ENCODE measurements at regions of chr17 and their contacts with region 1.

Region 1: DNA sequence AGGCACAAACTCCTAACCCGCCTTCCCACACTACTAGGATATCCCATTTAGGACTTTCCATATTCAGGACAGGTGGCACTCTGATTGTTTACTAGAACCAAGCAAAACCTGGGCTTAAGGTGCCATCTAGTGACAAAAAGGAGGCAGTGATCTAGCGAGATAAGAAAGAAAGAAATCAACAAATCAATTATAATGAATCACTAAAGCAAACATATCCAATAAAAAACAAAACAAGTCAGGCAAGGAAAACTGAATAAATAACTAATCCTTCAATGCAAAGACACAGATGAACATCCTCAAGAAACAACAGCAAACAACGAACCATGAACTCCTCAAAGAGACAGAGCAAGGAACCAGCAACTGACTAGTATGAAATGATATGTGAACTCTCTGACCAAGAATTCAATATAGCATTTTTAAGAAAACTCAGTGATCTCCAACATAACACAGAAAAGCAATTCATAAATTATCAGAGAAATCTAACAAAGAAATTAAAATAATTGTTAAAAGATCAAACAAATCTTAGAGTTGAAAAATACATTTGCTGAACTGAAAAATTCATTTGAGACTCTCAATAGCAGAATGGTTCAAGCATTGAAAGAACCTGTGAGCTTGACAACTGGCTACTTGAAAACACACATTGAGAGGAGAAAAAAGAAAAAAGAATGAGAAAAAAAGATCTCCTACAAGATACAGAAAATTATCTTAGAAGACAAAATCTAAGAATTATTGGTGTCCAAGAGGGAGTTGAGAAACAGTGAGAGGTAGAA is 203.7 kb downstream of the CEP112 start:
- DNase-seq: peak; percentile 90
- ATAC-seq: peak; percentile 94
- H3K4me3 ChIP-seq: no peak overlapping the region
- H3K27ac ChIP-seq: no peak overlapping the region
- H3K4me1 ChIP-seq: 0 out of 2 replicates have a peak, but pooled peaks cover 4% of the 10 kb centered on the region
- H3K27me3 ChIP-seq: no peaks in the 10 kb centered on the region
- CTCF ChIP-seq: peak; percentile 98

Region 2: GRCh38 chr17:65231662-65232335 is 756.5 kb before region 1 on chr17:
- CTCF ChIA-PET with region 1: no interaction called
- POLR2A ChIA-PET with region 1: no interaction called
- intact Hi-C with region 1: loop called (anchors 1 kb)
- DNase-seq: peak; percentile 91
- ATAC-seq: peak; percentile 90
- H3K4me3 ChIP-seq: no peak overlapping the region
- H3K27ac ChIP-seq: no peak overlapping the region
- H3K4me1 ChIP-seq: peaks cover 33% of the 10 kb centered on the region
- H3K27me3 ChIP-seq: no peaks in the 10 kb centered on the region
- CTCF ChIP-seq: peak; percentile 98

Region 3: DNA sequence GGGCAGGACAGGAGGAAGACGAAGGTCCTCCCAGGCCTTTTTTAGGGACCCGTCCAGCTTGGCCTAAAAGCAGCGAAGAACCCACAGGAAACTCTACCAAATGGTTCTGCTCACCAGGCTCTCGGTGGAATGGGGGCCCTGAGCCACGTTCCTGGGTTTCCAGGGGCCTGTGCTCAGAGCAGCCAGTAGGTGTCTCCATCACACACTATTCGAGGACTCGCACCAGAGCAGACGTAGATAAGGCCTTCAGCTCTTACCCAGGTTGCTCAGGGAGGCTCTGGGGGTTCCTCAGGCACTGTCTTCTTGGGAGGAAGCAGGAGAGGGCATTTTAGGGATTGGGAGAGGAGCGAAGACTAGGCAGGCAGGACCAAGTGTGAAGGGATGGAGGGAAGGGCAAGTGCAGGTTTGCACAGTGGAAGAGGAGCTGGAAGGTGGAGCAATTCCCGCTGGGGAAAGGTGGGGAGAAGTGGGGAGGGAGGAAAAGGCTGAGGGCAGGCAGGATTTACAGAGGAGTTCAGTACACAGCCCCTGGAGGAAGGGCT is 694.0 kb before region 1 on chr17:
- CTCF ChIA-PET with region 1: interaction called, 3 read pairs
- POLR2A ChIA-PET with region 1: no interaction called
- intact Hi-C with region 1: loop called (anchors 1 kb)
- DNase-seq: peak; percentile 83
- ATAC-seq: peak; percentile 98
- H3K4me3 ChIP-seq: no peak overlapping the region
- H3K27ac ChIP-seq: no peak overlapping the region
- H3K4me1 ChIP-seq: no peaks in the 10 kb centered on the region
- H3K27me3 ChIP-seq: no peaks in the 10 kb centered on the region
- CTCF ChIP-seq: peak; percentile 99

Region 4: DNA sequence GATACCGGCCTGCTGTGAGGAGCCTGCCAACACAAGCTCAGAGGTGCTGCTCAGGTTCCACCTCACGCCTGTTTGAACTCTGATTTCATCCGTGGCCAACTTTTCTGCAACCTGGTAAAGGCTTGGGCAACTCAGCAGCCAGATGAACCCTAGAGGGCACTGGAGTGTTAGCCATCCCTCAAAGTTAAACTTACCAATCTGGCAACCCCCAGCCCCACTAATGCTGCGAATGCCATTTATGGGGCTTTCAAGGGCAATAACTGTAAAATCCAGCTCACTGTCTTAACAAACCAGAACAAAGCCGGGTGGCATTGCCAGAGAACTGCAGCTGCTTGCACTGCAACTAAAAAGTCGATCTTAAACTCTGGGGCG is 532.3 kb before region 1 on chr17:
- CTCF ChIA-PET with region 1: no interaction called
- POLR2A ChIA-PET with region 1: no interaction called
- intact Hi-C with region 1: loop called (anchors 5 kb)
- DNase-seq: peak; percentile 43
- ATAC-seq: peak; percentile 64
- H3K4me3 ChIP-seq: no peak overlapping the region
- H3K27ac ChIP-seq: no peak overlapping the region
- H3K4me1 ChIP-seq: no peaks in the 10 kb centered on the region
- H3K27me3 ChIP-seq: 0 out of 2 replicates have a peak, but pooled peaks cover 2% of the 10 kb centered on the region
- CTCF ChIP-seq: peak; percentile 59

Region 5: GRCh38 chr17:65627891-65628659 is 360.2 kb before region 1 on chr17:
- CTCF ChIA-PET with region 1: no interaction called
- POLR2A ChIA-PET with region 1: no interaction called
- intact Hi-C with region 1: loop called (anchors 5 kb)
- DNase-seq: peak; percentile 98
- ATAC-seq: peak; percentile 99
- H3K4me3 ChIP-seq: peak overlapping the region; percentile 29; the same call in 1 of the 2 replicates
- H3K27ac ChIP-seq: peak overlapping the region; percentile 63
- H3K4me1 ChIP-seq: peaks cover 25% of the 10 kb centered on the region
- H3K27me3 ChIP-seq: no peaks in the 10 kb centered on the region
- CTCF ChIP-seq: no peak

Region 6: DNA sequence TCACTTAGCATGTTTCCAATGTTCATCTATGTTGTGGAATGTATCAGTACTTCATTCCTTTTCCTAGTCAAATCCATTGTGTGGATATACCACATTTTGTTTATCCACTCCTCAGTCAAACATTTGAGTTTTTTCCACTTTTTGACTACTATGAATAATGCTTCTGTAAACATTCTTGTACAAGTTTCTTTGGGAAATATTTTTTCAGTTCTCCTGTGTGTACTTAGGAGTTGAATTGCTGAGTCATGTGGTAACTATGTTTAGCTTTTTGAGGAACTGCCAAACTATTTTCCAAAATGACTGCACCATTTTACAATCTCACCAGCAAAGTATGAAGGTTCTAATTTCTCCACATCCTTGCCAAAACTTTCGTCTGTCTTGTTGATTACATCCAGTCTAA is 203.2 kb before region 1 on chr17:
- CTCF ChIA-PET with region 1: no interaction called
- POLR2A ChIA-PET with region 1: interaction called, 3 read pairs
- intact Hi-C with region 1: loop called (anchors 1 kb)
- DNase-seq: peak; percentile 99
- ATAC-seq: peak; percentile 80
- H3K4me3 ChIP-seq: no peak overlapping the region; the same call in 1 of the 2 replicates
- H3K27ac ChIP-seq: peak overlapping the region; percentile 88
- H3K4me1 ChIP-seq: peaks cover 36% of the 10 kb centered on the region
- H3K27me3 ChIP-seq: no peaks in the 10 kb centered on the region
- CTCF ChIP-seq: no peak

Region 7: DNA sequence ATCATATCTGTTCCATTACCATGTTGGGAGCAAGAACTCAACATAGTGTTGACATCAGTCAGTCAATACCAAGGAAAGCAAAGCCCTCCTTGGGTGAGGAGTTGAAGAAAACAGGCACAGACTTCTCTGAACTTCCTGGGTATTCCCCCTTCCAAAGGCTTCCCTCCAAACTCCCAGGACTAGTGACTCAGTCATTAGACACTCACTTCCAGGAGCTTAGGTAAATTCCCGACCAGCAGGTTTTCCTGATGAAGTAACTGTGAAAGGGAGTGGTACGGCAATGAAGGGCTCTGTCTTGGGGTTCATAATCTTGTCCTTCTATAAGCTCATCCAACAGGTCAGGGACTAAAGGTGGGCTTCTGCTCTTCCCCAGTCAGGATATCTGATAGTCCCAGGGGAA is 133.0 kb before region 1 on chr17:
- CTCF ChIA-PET with region 1: no interaction called
- POLR2A ChIA-PET with region 1: no interaction called
- intact Hi-C with region 1: loop called (anchors 5 kb)
- DNase-seq: peak; percentile 98
- ATAC-seq: peak; percentile 73
- H3K4me3 ChIP-seq: peak overlapping the region; percentile 10; the same call in 1 of the 2 replicates
- H3K27ac ChIP-seq: peak overlapping the region; percentile 88
- H3K4me1 ChIP-seq: peaks cover 47% of the 10 kb centered on the region
- H3K27me3 ChIP-seq: no peaks in the 10 kb centered on the region
- CTCF ChIP-seq: no peak